PC-9 (cell line): ENCODE measurements at regions of chr17 and their contacts with region 1.

Region 1: DNA sequence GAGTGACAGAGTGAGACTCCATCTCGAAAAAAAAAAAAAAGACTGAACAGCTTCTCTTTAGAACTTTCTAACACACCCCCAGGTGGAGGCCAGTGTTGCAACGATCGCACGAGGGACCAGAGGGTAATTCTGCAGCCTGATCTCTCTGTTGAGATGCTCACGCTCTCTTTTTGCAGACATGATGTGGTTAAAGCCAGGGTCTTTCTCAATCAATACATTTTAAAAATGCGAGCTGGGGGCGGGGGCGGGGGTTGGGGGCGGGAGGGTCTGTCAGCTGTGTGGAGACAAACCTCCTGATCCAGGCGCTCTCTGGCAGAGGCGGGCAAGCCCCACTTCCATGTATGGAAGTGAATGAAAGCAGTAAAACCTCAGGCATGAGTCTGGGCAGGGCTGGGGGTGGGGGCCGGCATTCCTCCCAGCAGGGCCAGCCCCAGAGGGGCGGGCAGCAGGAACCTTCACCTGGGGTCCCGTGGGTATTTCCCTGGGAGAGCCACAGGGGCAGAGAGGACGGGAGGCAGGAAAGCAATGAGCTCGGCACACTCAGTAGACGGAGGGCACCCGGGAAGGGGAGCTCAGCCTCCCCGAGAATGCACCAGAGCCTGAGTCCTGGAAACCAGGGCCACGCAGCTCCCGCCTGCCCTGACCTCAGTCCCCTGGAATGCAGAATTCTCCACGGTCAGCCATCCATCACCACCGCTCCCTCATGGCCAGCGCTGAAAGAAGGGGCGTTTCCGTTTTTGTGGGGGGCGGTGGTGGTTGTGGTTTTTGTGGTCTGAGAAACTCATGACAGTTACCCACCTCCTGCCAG is 28.0 kb downstream of the NXN start:
- DNase-seq: peak; percentile 82 to 88
- H3K4me3 ChIP-seq: peak overlapping the region; percentile 39; the same call in 1 of the 2 replicates
- H3K27ac ChIP-seq: peak overlapping the region; percentile 51
- H3K4me1 ChIP-seq: peaks cover 21% of the 10 kb centered on the region
- H3K27me3 ChIP-seq: no peaks in the 10 kb centered on the region
- CTCF ChIP-seq: no peak

Region 2: DNA sequence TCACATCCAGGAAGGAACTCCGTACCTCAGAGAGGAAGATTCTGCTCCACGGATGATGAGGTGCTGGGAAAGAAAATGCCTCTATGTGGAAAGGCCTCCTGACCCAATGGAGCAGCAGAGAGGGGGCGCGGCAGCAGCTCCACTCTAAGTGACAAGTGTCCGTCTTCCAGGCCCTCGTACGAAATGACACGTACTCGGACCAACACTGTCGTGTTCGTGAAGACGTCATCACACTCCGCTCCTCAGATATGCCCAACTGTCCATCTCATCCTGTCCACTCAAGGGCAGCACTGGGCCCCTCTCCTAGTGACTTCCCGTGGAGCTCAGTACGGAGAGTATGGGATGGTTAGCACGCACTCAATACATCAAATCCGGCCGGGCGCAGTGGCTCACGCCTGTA is 137.2 kb before region 1 on chr17:
- CTCF ChIA-PET with region 1: no interaction called
- POLR2A ChIA-PET with region 1: no interaction called
- intact Hi-C with region 1: no loop called
- DNase-seq: no peak
- H3K4me3 ChIP-seq: no peak overlapping the region
- H3K27ac ChIP-seq: no peak overlapping the region
- H3K4me1 ChIP-seq: no peaks in the 10 kb centered on the region
- H3K27me3 ChIP-seq: no peaks in the 10 kb centered on the region
- CTCF ChIP-seq: no peak

Region 3: GRCh38 chr17:927611-928461 is 23.7 kb before region 1 on chr17:
- CTCF ChIA-PET with region 1: no interaction called
- POLR2A ChIA-PET with region 1: interaction called, 3 read pairs
- intact Hi-C with region 1: loop called (anchors 1 kb)
- DNase-seq: peak; percentile 83 to 97
- H3K4me3 ChIP-seq: peak overlapping the region; percentile 29; the same call in 1 of the 2 replicates
- H3K27ac ChIP-seq: peak overlapping the region; percentile 84
- H3K4me1 ChIP-seq: peaks cover 60% of the 10 kb centered on the region
- H3K27me3 ChIP-seq: no peaks in the 10 kb centered on the region
- CTCF ChIP-seq: no peak

Region 4: DNA sequence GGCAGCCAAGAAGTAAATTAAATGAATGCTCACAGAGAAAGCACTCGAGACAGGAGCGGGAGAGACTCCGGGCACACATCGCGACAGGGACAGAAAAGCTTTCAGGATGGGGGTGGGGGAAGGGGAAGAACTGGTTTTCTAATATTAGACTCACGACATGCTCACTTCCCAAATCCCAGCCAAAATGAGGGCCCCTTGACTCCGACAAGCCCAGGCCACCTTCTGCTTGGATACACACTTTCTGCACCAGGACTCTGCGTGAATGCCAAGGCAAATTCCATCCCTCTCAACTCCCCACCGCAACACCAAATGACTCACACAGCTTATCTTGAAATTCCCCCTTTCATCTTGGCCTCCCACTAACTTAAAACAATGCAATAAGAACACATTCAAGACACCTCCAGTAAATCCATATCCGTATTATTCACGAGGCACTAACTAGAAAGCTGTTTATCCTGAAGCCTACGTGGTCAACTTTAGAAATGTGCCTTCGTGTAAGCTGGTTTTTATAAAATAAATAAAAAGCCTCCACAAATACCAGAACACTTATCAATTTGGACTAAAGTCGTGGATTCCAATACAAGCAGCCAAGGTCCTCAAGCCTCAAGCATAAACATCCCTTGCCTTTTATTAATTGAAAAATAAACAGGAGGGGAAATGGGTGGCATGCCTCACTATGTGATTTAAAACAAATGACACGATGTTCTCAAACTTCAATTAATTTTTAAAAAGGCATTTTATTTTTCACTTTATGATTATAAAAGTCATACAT is 18.0 kb before region 1 on chr17:
- CTCF ChIA-PET with region 1: no interaction called
- POLR2A ChIA-PET with region 1: no interaction called
- intact Hi-C with region 1: loop called (anchors 1 kb)
- DNase-seq: peak; percentile 91 to 99
- H3K4me3 ChIP-seq: peak overlapping the region; percentile 38; the same call in 1 of the 2 replicates
- H3K27ac ChIP-seq: peak overlapping the region; percentile 91
- H3K4me1 ChIP-seq: peaks cover 49% of the 10 kb centered on the region
- H3K27me3 ChIP-seq: no peaks in the 10 kb centered on the region
- CTCF ChIP-seq: no peak

Region 5: DNA sequence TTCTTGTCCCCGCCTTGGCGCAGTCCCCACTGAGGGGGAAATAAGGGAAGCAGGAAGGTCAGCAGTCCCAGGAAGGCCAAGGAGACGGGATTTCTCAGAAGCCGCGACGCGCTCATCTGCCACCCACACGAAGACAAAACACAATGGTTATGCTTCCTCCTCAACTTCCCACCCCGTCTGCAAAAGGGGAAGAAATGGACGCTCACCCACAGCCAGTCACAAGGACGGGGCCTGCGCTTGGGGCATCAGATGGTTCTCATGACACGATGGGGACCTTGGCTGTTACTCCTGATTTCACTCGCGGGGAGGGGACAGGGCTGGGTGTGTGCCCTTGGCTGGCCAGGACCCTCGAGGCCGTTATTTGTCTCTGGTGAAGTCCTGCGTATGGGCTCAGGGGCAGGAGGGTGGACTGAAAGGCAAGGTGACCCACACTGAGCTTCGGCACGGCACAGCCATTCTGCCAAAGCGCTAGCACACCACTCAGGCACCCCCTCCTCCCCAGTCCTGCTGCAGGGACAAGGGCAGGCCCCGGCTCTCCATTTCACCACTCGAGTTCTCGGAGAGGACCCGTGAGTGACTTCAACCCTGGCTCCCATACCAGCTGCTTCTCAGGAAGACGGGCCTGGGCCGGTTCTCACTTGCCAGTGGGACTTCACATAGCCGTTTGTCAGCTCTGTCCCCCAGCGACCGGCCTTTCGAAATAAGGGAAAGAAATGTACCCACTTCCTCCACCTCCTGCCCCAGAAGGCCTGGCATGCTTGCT is 143.7 kb after region 1 on chr17:
- CTCF ChIA-PET with region 1: no interaction called
- POLR2A ChIA-PET with region 1: no interaction called
- intact Hi-C with region 1: no loop called
- DNase-seq: no peak
- H3K4me3 ChIP-seq: no peak overlapping the region
- H3K27ac ChIP-seq: no peak overlapping the region
- H3K4me1 ChIP-seq: no peaks in the 10 kb centered on the region
- H3K27me3 ChIP-seq: no peaks in the 10 kb centered on the region
- CTCF ChIP-seq: no peak